ENCODE measurements at regions of chr17 and their contacts with region 1.

Region 1: GRCh38 chr17:57987580-57988421 is at the start of gene VEZF1:
- DNase-seq: peak; percentile 76 to 85
- ATAC-seq: peak; percentile 65 to 70
- H3K4me3 ChIP-seq: peak within 1 kb of the TSS; percentile 77
- H3K27ac ChIP-seq: peak within 1 kb of the TSS; percentile 96 to 98
- H3K4me1 ChIP-seq: peaks cover 75% of the 10 kb centered on the region
- CTCF ChIP-seq: no peak
- EP300 ChIP-seq: no peak
- POLR2A ChIP-seq: peak; percentile 18; the same call in 1 of the 2 replicates
- RAD21 ChIP-seq: 0 out of 5 replicates have a peak, but pooled peaks of 1 of the 2 experiments have one; percentile 9
- polyA plus RNA-seq, gene VEZF1: 57.7 and 63.8 TPM in 2 replicates

Region 2: GRCh38 chr17:57849874-57850754 is 137.7 kb before region 1 on chr17 and contains the start of gene MRPS23:
- CTCF ChIA-PET with region 1: interaction called, 1,377 read pairs
- POLR2A ChIA-PET with region 1: interaction called, 14 read pairs
- DNase-seq: peak; percentile 91 to 99
- ATAC-seq: peak; percentile 93 to 95
- H3K4me3 ChIP-seq: peak within 1 kb of the TSS; percentile 95
- H3K27ac ChIP-seq: peak within 1 kb of the TSS; percentile 93
- H3K4me1 ChIP-seq: peaks cover 54% of the 10 kb centered on the region
- CTCF ChIP-seq: no peak
- EP300 ChIP-seq: no peak
- POLR2A ChIP-seq: peak; percentile 84
- RAD21 ChIP-seq: peak; percentile 28 to 34; a peak in 4 of 5 replicates
- polyA plus RNA-seq, gene MRPS23: 73.2 and 110 TPM in 2 replicates

Region 3: DNA sequence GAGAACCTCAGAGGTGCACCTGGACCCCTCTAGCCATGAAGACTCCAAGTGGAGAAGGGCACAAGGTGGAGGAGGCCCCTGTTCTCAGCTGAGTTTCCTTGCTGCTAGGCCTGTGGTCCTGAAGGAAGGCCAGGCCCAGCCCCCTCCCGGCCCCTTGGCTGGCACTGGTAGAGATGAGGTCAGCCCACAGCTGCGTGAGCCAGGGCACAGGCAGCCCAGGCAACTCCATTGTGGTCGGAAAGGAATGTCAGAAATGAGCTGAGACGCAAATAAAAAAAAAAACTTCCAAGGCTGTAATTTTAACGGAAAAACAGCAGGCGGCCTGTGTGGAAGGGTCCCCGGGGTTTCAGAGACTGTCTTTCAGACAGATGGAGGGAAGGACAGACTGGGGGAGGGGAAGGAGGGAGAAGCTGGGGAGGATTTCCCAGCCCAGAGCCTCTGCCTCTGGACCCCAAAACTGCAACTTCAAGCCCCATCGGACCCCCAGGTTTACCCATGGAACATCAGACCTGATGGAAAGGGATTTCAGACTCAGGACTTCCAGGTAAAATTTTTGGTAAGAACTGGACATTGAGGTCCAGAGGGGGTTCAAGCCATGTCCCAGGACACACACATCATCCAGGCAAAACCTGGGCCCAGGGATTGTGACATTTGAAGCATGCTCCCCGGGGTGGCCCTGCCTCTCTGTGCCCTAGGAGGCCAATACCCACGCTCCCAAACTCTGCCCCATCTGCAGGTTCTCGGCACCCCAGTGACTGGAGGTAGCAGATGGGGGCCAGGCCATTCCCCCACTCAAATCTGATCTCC is 112.3 kb before region 1 on chr17:
- CTCF ChIA-PET with region 1: interaction called, 1,377 read pairs
- POLR2A ChIA-PET with region 1: interaction called, 15 read pairs
- DNase-seq: peak; percentile 96 to 98
- ATAC-seq: peak; percentile 83 to 88
- H3K4me3 ChIP-seq: peak overlapping the region; percentile 7; the same call in 1 of the 3 replicates
- H3K27ac ChIP-seq: peak overlapping the region; percentile 92 to 95
- H3K4me1 ChIP-seq: peaks cover 95% of the 10 kb centered on the region
- CTCF ChIP-seq: peak; percentile 54; the same call in 2 of the 3 replicates
- EP300 ChIP-seq: peak; percentile 73 to 92; a peak in 3 of 5 replicates
- POLR2A ChIP-seq: no peak
- RAD21 ChIP-seq: peak; percentile 72 to 86

Region 4: GRCh38 chr17:57946798-57947358 is 40.9 kb before region 1 on chr17:
- CTCF ChIA-PET with region 1: interaction called, 386 read pairs
- POLR2A ChIA-PET with region 1: interaction called, 23 read pairs
- DNase-seq: peak; percentile 66 to 83
- ATAC-seq: peak; percentile 20 to 22; a peak in 4 of 6 replicates
- H3K4me3 ChIP-seq: peak overlapping the region; percentile 34
- H3K27ac ChIP-seq: peak overlapping the region; percentile 93 to 100
- H3K4me1 ChIP-seq: peaks cover 91% of the 10 kb centered on the region
- CTCF ChIP-seq: no peak
- EP300 ChIP-seq: no peak
- POLR2A ChIP-seq: no peak
- RAD21 ChIP-seq: no peak; a peak in 1 of 5 replicates

Region 5: GRCh38 chr17:57970706-57971105 is 17.1 kb before region 1 on chr17:
- CTCF ChIA-PET with region 1: interaction called, 386 read pairs
- POLR2A ChIA-PET with region 1: interaction called, 3 read pairs
- DNase-seq: no peak
- ATAC-seq: peak in 1 of 2 experiments; percentile 9; a peak in 1 of 6 replicates
- H3K4me3 ChIP-seq: no peak overlapping the region
- H3K27ac ChIP-seq: peak overlapping the region in 1 of 2 experiments; percentile 50; a peak in 4 of 6 replicates
- H3K4me1 ChIP-seq: peaks cover 36% of the 10 kb centered on the region
- CTCF ChIP-seq: no peak
- EP300 ChIP-seq: no peak
- POLR2A ChIP-seq: no peak
- RAD21 ChIP-seq: no peak

Region 6: GRCh38 chr17:58156839-58157803 is 169.3 kb after region 1 on chr17:
- CTCF ChIA-PET with region 1: no interaction called
- POLR2A ChIA-PET with region 1: no interaction called
- DNase-seq: peak; percentile 50 to 56
- ATAC-seq: peak; percentile 86 to 91
- H3K4me3 ChIP-seq: peak overlapping the region; percentile 51
- H3K27ac ChIP-seq: peak overlapping the region in 1 of 2 experiments; percentile 63; a peak in 4 of 6 replicates
- H3K4me1 ChIP-seq: no peaks in the 10 kb centered on the region
- CTCF ChIP-seq: no peak; the same call in 2 of the 3 replicates
- EP300 ChIP-seq: no peak
- POLR2A ChIP-seq: 0 out of 2 replicates have a peak, but pooled peaks have one; percentile 24
- RAD21 ChIP-seq: no peak